ENCODE measurements at regions of chr10 and their contacts with region 1.

Region 1: GRCh38 chr10:46299536-46300369 is 13.0 kb downstream of the ANTXRL start:
- DNase-seq: no peak
- ATAC-seq: peak; percentile 44
- H3K4me3 ChIP-seq: no peak overlapping the region
- H3K27ac ChIP-seq: no peak overlapping the region
- H3K4me1 ChIP-seq: peaks cover 0 to 9% of the 10 kb centered on the region in 2 experiments; a peak in 2 of 5 replicates
- H3K27me3 ChIP-seq: peaks cover 9 to 63% of the 10 kb centered on the region in 2 experiments; a peak in 4 of 5 replicates
- CTCF ChIP-seq: no peak
- EP300 ChIP-seq: no peak
- POLR2A ChIP-seq: no peak
- RAD21 ChIP-seq: no peak

Region 2: GRCh38 chr10:46198516-46198915 is 101.2 kb before region 1 on chr10:
- CTCF ChIA-PET with region 1: no interaction called
- POLR2A ChIA-PET with region 1: no interaction called
- in situ Hi-C with region 1: no loop called
- intact Hi-C with region 1: no loop called
- DNase-seq: no peak
- ATAC-seq: no peak
- H3K4me3 ChIP-seq: no peak overlapping the region
- H3K27ac ChIP-seq: no peak overlapping the region
- H3K4me1 ChIP-seq: no peaks in the 10 kb centered on the region
- H3K27me3 ChIP-seq: no peaks in the 10 kb centered on the region
- CTCF ChIP-seq: no peak
- EP300 ChIP-seq: no peak
- POLR2A ChIP-seq: no peak
- RAD21 ChIP-seq: no peak

Region 3: GRCh38 chr10:46264737-46265368 is 34.9 kb before region 1 on chr10:
- CTCF ChIA-PET with region 1: no interaction called
- POLR2A ChIA-PET with region 1: no interaction called
- in situ Hi-C with region 1: loop called (anchors 5 kb)
- intact Hi-C with region 1: no loop called
- DNase-seq: no peak
- ATAC-seq: no peak
- H3K4me3 ChIP-seq: no peak overlapping the region
- H3K27ac ChIP-seq: no peak overlapping the region
- H3K4me1 ChIP-seq: peaks cover 3 to 7% of the 10 kb centered on the region in 2 experiments; a peak in 4 of 5 replicates
- H3K27me3 ChIP-seq: peaks cover 21 to 24% of the 10 kb centered on the region in 2 experiments
- CTCF ChIP-seq: no peak
- EP300 ChIP-seq: no peak
- POLR2A ChIP-seq: no peak
- RAD21 ChIP-seq: no peak

Measured in K562 (cell line).